HEK293 (cell line): ENCODE measurements at regions of chr12 and their contacts with region 1.

Region 1: DNA sequence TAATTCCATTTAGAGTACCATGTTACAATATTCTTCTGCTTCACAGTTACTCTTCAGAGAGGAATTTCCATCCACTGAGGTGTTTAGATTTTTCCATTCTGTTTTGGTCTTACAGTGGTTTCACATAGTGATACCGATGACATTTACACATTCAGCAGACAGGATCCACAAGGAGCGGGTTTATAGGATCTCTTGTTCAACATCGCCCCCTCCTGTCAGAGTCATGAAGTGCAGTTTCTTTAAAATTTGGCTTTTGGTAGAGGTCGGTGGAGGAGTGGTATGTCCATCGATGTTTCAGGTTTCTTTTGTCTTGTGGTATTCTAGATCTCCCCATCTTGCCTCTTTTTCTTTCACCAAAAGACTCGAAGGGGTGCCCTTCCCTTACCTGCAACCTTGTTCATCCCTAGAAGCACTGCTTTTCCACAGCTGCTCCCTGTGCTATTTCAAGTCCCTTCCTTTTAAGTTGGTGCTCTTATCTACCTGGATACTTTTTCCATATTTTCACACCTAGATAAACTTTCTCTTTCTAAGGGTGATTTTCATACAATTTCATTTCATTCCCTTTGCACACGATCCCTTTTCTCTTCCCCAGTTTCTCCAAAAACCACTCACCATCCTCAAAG is 181.3 kb downstream of the ITPR2 start:
- H3K4me3 ChIP-seq: no peak overlapping the region
- H3K27ac ChIP-seq: no peak overlapping the region
- H3K4me1 ChIP-seq: no peaks in the 10 kb centered on the region
- CTCF ChIP-seq: peak; percentile 57

Region 2: DNA sequence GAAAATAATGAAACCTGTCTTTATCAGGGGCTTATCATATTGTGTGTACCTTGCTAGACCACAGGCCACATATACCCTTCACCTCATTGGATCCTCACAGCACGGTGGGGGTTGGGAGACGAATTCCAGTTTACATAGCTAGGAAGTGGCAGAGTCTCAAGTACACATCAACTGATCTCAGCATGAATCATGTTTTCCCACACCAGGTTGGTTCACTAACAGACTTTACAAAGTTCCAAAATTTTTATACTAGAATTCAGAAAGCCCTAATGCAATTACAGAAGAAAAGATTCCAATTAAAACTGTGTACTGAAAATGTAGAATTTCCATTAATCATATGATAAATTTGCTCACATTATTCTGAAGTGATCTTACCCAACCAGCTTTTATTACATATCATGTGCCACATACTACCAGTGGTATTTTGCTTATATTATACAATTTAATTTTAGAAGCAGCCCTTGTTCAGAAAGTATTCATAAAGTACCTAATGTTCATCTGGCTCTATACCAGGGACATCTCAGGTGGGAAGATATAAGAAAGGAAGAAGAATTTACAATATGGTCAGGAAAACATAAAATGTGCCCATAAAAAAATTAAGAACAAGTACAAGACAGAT is 14.9 kb before region 1 on chr12:
- CTCF ChIA-PET with region 1: interaction called, 10 read pairs
- POLR2A ChIA-PET with region 1: no interaction called
- H3K4me3 ChIP-seq: no peak overlapping the region
- H3K27ac ChIP-seq: no peak overlapping the region
- H3K4me1 ChIP-seq: peaks cover 4% of the 10 kb centered on the region; the same call in 1 of the 2 replicates
- CTCF ChIP-seq: no peak

Region 3: DNA sequence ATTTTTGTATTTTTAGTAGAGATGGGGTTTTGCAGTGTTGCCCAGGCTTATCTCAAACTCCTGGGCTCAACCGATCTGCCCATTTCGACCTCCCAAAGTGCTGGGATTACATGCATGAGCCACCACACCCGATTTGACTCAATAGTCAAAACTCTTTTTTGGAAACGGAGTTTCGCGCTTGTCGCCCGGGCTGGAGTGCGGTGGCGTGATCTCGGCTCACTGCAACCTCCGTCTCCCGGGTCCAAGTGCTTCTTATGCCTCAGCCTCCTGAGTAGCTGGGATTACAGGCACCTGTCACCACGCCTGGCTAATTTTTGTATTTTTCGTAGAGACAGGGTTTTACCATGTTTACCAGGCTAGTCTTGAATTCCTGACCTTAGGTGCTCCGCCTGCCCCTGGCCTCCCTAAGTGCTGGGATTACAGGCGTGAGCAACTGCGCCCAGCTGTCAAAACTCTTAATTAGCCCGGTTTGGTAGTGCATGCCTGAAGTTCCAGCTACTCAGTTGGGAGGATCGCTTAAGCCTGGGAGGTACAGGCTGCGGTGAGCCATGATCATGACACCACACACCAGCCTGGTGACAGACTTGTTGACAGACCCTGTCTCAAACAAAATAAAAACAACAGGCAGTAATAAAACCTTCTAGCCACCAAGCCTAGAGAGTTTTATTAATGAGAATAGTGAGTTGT is 383.1 kb after region 1 on chr12:
- CTCF ChIA-PET with region 1: no interaction called
- POLR2A ChIA-PET with region 1: no interaction called
- H3K4me3 ChIP-seq: no peak overlapping the region
- H3K27ac ChIP-seq: no peak overlapping the region
- H3K4me1 ChIP-seq: no peaks in the 10 kb centered on the region
- CTCF ChIP-seq: no peak